Endothelial cell of umbilical vein (primary cell): ENCODE measurements at regions of chr10 and their contacts with region 1.

Region 1: DNA sequence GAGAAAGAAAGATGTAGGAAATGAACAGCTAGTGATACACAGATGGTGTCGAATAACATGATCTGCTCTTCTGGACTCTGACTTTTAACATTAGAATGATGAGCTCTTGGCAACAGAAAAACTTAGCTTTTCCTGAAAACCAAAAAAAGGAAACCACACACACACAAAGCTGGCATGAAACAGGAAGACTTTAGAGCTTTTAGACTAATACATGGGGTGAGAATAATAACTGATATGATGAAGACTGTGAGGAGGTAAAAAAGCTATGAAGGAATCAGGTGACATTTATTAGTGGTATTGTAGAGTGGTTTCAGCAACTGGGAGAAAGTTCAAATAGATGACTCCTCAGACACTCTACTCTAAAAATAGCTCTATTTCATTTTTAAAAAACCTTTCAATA is 491.9 kb downstream of the PARD3 start:
- DNase-seq: peak; percentile 67
- H3K4me3 ChIP-seq: no peak overlapping the region
- H3K27ac ChIP-seq: no peak overlapping the region
- H3K4me1 ChIP-seq: peaks cover 6% of the 10 kb centered on the region
- H3K27me3 ChIP-seq: no peaks in the 10 kb centered on the region
- CTCF ChIP-seq: no peak
- POLR2A ChIP-seq: no peak

Region 2: DNA sequence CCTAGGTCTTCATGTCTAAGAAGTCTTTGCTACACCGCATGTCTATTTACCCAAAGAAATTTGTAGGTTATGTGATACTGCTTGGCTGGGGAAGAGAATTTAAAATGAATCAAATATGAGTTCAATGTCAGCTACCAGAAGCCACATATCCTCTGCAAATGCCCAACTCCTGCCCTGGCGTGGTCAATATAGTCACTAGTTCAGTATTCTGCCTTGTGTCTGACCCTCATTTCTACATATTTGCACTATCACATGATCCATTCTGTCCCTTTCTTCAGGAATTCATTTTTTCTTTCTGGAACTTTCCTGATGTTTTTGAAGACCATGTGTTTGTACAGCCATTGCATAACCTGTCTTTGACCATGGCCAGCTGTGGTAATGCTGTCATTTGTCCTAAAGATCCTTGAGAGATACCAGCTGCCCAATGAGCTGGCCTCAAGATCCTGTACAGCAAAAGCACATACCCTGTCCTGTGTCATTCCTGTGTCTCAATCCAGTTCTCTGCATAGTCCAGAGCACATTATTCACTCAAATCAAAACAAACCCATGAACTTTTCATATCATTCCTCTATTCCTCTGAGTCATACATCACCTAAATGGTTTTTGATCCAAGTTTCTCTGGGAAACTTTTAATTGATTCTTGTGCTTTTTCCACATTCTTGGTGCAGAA is 32.6 kb before region 1 on chr10:
- CTCF ChIA-PET with region 1: no interaction called
- POLR2A ChIA-PET with region 1: no interaction called
- dilution Hi-C with region 1: no loop called
- intact Hi-C with region 1: no loop called
- DNase-seq: peak; percentile 67
- H3K4me3 ChIP-seq: no peak overlapping the region
- H3K27ac ChIP-seq: no peak overlapping the region
- H3K4me1 ChIP-seq: peaks cover 10% of the 10 kb centered on the region
- H3K27me3 ChIP-seq: no peaks in the 10 kb centered on the region
- CTCF ChIP-seq: no peak
- POLR2A ChIP-seq: no peak

Region 3: DNA sequence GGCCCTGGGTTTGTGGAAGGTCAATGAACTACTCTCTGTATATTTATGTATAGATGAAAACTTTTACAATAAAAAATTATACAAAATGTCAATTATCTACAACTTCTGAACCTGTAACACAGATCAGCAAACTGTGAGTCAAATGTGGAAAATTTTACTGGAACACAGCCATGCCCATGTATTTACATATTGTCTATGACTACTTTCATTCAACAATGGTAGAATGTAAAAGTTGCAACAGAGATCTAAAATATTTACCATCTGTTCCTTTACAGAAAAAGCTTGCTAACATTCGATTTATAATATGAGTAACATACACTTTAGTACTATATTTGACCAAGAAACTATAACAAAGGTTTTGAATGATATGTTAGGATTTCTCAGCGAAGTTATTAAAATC is 10.3 kb after region 1 on chr10:
- CTCF ChIA-PET with region 1: interaction called, 10 read pairs
- POLR2A ChIA-PET with region 1: no interaction called
- dilution Hi-C with region 1: no loop called
- intact Hi-C with region 1: loop called (anchors 2 kb)
- DNase-seq: no peak
- H3K4me3 ChIP-seq: no peak overlapping the region
- H3K27ac ChIP-seq: no peak overlapping the region
- H3K4me1 ChIP-seq: peaks cover 16% of the 10 kb centered on the region
- H3K27me3 ChIP-seq: no peaks in the 10 kb centered on the region
- CTCF ChIP-seq: no peak
- POLR2A ChIP-seq: no peak

Region 4: GRCh38 chr10:34346516-34347100 is 23.4 kb after region 1 on chr10:
- CTCF ChIA-PET with region 1: no interaction called
- POLR2A ChIA-PET with region 1: no interaction called
- dilution Hi-C with region 1: no loop called
- intact Hi-C with region 1: no loop called
- DNase-seq: no peak
- H3K4me3 ChIP-seq: no peak overlapping the region
- H3K27ac ChIP-seq: no peak overlapping the region
- H3K4me1 ChIP-seq: peaks cover 24% of the 10 kb centered on the region
- H3K27me3 ChIP-seq: no peaks in the 10 kb centered on the region
- CTCF ChIP-seq: no peak
- POLR2A ChIP-seq: no peak

Region 5: DNA sequence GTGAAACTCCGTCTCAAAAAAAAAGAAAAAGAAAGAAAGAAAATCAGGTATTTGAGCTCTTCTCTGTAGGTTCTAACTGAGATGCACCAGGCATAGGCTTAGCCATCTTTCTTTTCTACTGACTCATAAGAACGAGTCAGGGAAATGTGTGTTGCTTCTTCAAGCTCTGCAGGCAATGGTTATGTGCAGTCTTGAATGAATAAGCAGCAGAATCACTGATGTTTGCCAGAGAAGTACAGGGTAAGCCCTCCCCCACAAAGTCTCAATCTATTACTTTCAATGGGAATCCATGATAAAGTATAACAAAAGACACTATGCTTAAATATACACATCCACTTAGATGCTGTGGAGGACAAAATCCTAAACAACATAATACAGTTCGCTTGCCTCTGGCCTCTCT is 252.7 kb after region 1 on chr10:
- CTCF ChIA-PET with region 1: no interaction called
- POLR2A ChIA-PET with region 1: no interaction called
- dilution Hi-C with region 1: no loop called
- intact Hi-C with region 1: no loop called
- DNase-seq: no peak
- H3K4me3 ChIP-seq: no peak overlapping the region
- H3K27ac ChIP-seq: no peak overlapping the region
- H3K4me1 ChIP-seq: peaks cover 7% of the 10 kb centered on the region
- H3K27me3 ChIP-seq: no peaks in the 10 kb centered on the region
- CTCF ChIP-seq: no peak
- POLR2A ChIP-seq: no peak